ENCODE measurements at regions of chr17 and their contacts with region 1.

Region 1: DNA sequence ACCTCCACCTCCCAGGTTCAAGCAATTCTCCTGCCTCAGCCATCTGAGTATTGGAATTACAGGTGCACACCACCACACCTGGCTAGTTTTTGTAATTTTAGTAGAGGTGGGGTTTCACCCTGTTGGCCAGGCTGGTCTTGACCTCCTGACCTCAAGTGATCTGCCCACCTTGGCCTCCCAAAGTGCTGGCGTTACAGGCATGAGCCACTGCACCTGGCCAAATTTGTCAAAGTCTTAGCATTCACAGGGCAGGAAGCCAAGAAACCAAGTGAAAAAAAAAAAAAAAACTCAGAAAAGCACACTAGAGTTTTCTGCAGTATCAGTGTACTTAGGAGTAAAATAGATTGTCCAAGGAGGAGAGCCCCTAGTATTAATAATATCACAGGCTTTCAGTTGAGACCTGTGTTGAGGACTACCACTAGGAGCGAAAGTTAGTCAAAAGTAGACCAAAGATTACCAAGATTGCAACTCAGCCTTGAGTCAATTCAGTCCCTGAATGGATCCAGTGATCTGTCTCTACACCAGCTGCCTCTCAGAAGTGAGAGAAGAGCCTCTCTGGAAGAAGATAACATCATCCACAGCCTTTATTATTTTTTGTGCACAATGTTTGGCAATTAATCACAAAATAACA is 159.7 kb downstream of the CEP112 start:
- DNase-seq: no peak
- ATAC-seq: no peak
- H3K4me3 ChIP-seq: no peak overlapping the region
- H3K27ac ChIP-seq: no peak overlapping the region
- H3K4me1 ChIP-seq: no peaks in the 10 kb centered on the region
- H3K27me3 ChIP-seq: no peaks in the 10 kb centered on the region
- CTCF ChIP-seq: no peak

Region 2: DNA sequence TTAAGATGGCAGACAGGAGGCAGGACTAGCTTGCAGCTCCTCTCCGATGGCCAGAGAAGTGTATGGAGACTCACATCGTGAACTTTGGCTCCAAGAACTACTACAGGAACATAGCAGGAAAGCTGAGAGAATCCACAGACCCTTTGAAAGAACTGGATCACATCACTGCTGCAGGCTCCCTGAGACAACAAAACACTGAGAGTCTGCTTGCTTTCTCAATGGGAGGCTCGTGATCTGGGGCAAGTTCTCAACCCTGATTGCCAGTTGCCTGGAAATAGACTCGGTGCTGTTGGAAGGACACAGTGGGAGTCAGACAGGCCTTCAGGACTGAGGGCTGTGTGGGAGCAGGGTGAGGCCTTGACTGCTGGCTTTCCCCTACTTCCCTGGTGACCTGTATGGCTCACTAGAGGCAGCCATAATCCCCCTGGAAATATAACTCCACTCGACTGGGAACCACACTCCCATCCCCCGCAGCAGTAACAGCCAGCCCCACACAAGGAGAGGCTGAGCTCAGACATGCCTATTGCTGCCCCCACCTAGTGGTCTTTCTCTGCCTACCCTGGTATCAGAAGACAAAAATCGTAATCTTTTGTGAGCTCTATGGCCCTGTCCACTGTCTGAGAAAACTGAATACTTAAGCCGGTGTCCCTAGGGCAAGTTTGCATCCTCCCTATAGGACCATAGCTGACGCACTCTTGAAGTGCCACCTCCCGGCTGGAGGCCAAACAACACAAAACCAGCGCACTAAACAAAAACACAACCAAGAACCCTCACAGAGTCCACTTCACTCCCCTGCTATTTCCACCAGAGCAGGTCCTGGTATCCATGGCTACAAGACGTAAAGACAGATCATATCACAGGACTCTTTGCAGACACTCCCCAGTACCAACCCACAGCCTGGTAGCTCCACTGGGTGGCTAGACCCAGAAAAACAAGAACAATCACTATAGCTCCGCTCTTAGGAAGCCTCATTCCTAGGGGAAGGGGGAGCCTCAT is 78.6 kb before region 1 on chr17:
- CTCF ChIA-PET with region 1: no interaction called
- POLR2A ChIA-PET with region 1: no interaction called
- intact Hi-C with region 1: no loop called
- DNase-seq: no peak
- ATAC-seq: no peak
- H3K4me3 ChIP-seq: no peak overlapping the region
- H3K27ac ChIP-seq: no peak overlapping the region
- H3K4me1 ChIP-seq: no peaks in the 10 kb centered on the region
- H3K27me3 ChIP-seq: no peaks in the 10 kb centered on the region
- CTCF ChIP-seq: no peak

Region 3: DNA sequence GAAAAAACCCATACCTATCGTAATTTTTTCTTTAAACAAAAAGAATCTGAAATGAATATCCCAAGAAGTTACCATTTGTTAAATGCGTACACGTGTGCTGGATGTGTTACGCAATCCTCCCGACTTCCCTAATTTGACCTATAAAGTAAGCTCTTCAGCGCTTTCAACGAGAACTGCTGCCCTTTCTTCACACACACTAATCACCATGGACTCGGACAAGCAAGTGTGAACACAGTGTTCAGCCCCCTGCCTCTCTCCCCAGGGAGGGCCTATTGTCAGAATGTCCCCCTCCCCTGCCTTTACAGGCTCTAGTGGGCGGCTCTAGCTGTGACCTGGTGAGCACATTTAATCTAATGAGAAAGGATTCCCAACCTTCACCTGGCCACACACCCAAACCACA is 56.3 kb before region 1 on chr17:
- CTCF ChIA-PET with region 1: no interaction called
- POLR2A ChIA-PET with region 1: no interaction called
- intact Hi-C with region 1: no loop called
- DNase-seq: no peak
- ATAC-seq: no peak
- H3K4me3 ChIP-seq: no peak overlapping the region
- H3K27ac ChIP-seq: no peak overlapping the region
- H3K4me1 ChIP-seq: no peaks in the 10 kb centered on the region
- H3K27me3 ChIP-seq: no peaks in the 10 kb centered on the region
- CTCF ChIP-seq: no peak

Region 4: DNA sequence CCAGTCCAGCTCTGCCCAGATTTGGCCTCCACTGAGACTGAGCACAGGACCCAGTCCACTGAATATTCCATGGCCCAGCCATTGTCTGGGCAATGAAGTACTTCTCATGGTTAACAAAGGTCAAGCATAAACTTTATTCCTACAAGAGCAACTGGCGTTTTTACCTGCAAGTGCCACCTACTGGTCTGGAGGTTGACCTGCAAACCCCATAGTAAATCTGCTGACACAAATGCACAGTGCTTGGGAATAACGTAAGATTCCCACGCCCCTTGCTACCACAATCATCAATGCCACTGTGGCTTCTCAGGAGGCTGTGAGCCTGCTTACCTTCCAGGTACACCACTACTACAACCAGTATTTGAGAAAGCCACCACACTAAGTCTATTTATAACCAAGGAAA is 10.4 kb before region 1 on chr17:
- CTCF ChIA-PET with region 1: no interaction called
- POLR2A ChIA-PET with region 1: no interaction called
- intact Hi-C with region 1: loop called (anchors 1 kb)
- DNase-seq: peak; percentile 4
- ATAC-seq: no peak
- H3K4me3 ChIP-seq: no peak overlapping the region
- H3K27ac ChIP-seq: no peak overlapping the region
- H3K4me1 ChIP-seq: no peaks in the 10 kb centered on the region
- H3K27me3 ChIP-seq: no peaks in the 10 kb centered on the region
- CTCF ChIP-seq: peak; percentile 36; the same call in 1 of the 2 replicates

Region 5: GRCh38 chr17:66129699-66130098 is 97.5 kb after region 1 on chr17:
- CTCF ChIA-PET with region 1: no interaction called
- POLR2A ChIA-PET with region 1: no interaction called
- intact Hi-C with region 1: no loop called
- DNase-seq: no peak
- ATAC-seq: no peak
- H3K4me3 ChIP-seq: no peak overlapping the region
- H3K27ac ChIP-seq: no peak overlapping the region
- H3K4me1 ChIP-seq: no peaks in the 10 kb centered on the region
- H3K27me3 ChIP-seq: no peaks in the 10 kb centered on the region
- CTCF ChIP-seq: no peak

Region 6: GRCh38 chr17:66143657-66144282 is 111.6 kb after region 1 on chr17:
- CTCF ChIA-PET with region 1: no interaction called
- POLR2A ChIA-PET with region 1: no interaction called
- intact Hi-C with region 1: loop called (anchors 10 kb)
- DNase-seq: peak; percentile 8
- ATAC-seq: peak; percentile 68
- H3K4me3 ChIP-seq: no peak overlapping the region
- H3K27ac ChIP-seq: no peak overlapping the region
- H3K4me1 ChIP-seq: no peaks in the 10 kb centered on the region
- H3K27me3 ChIP-seq: no peaks in the 10 kb centered on the region
- CTCF ChIP-seq: no peak